Activated CD4-positive, alpha-beta T cell treated with anti-CD3 and anti-CD28 coated beads, Interleukin-2, amount 10 ng/mL, durations not matched to agents 7 days and 5 days (primary cell): ENCODE measurements at regions of chr7 and their contacts with region 1.

Region 1: DNA sequence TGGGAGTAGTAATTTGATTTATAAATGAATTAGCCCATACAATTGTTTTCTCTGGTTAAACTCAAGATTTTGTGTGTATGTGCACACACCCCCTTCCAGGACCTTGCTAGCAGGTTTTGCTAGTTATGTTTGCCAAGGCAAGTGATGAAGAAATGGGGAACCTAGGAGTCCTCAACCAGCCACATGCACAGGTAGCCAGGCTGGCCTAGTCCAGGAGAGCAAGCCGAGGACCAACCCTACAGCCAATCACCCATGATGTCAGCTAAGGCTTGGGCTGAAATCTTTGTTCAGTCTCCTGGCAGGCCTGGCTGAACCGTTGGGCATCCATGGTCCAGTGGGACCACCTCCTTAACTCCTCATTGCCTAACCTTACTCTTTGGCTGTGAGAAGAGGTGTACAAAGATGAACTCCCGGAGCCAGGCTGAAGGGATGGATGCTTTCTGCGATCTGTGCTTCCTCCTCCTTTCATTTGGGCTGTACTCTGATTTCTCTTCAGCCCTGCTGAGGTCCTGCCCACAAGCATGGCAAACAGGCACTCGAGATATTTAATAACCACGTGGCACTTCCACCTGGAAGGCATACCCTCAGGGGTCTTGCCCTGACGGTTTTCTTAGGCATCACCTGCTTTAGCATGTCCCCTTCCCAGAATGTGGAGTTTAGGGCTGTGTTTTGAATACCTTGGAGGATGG is 22.1 kb downstream of the HNRNPA2B1 start:
- DNase-seq: no peak
- H3K4me3 Mint-ChIP-seq: no peak overlapping the region
- H3K27ac Mint-ChIP-seq: peak overlapping the region; percentile 42
- H3K4me1 Mint-ChIP-seq: peaks cover 10% of the 10 kb centered on the region
- H3K27me3 Mint-ChIP-seq: no peaks in the 10 kb centered on the region

Region 2: GRCh38 chr7:26160881-26161280 is 17.5 kb before region 1 on chr7:
- CTCF ChIA-PET with region 1: interaction called, 14 read pairs
- POLR2A ChIA-PET with region 1: no interaction called
- DNase-seq: no peak
- H3K4me3 Mint-ChIP-seq: no peak overlapping the region
- H3K27ac Mint-ChIP-seq: no peak overlapping the region
- H3K4me1 Mint-ChIP-seq: peaks cover 59% of the 10 kb centered on the region
- H3K27me3 Mint-ChIP-seq: no peaks in the 10 kb centered on the region